GM10248 (cell line): ENCODE measurements at regions of chr21 and their contacts with region 1.

Region 1: DNA sequence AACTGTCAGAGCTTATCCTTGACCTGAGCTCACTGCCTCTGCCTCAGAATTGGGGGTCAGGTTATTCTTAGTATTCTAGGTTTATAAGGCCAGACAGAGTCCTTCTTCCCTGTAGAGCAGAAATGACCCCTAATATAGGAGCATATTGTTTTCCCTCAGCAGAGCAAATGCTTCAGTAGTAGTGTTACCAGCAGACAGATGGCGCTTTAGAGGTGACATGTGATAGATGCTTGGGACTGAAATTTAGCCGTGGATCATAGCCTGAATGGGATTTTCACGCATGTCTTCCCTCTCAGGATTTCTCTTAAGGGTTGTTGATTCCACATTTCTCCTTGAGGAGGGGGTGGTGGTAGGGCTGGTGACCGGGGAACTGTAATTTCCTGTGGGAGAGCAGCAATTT is 24.5 kb downstream of the ADARB1 start:
- DNase-seq: peak; percentile 56
- CTCF ChIP-seq: peak; percentile 60

Region 2: GRCh38 chr21:45029298-45029947 is 69.4 kb before region 1 on chr21:
- CTCF ChIA-PET with region 1: no interaction called
- POLR2A ChIA-PET with region 1: no interaction called
- DNase-seq: no peak
- CTCF ChIP-seq: no peak

Region 3: GRCh38 chr21:45078877-45079281 is 20.0 kb before region 1 on chr21:
- CTCF ChIA-PET with region 1: interaction called, 10 read pairs
- POLR2A ChIA-PET with region 1: no interaction called
- DNase-seq: no peak
- CTCF ChIP-seq: no peak

Region 4: DNA sequence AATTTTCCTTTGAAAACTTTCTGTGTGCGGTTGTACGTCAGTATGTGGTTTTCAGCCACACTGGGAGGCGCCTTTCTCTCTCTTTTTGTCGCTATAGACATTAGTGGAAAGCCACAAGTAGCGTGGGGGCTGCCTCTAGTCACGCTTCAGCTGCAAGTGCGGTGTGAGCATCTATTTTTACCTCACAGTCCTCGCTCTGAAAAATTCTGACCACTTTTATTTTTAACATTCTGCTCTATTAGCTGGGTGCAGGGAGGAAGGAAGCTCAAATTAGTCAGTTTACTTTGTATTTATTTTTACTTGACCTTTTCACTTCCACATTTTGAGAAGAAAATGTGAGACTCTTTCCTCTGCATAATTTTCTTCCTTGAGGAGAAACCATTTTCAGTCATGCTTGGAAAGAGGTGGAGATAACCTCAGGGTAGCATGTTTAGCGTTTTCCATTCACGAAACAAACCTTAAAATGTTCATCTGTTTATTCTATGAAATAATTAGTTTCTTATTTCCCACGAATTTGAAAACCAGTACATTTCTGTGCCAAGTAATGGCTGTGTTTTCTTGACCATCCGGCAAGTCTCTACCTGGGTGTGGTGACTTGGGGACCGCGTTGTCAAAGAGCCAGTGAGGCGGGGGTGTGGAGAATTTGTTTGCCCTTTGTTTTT is 11.1 kb after region 1 on chr21:
- CTCF ChIA-PET with region 1: interaction called, 20 read pairs
- POLR2A ChIA-PET with region 1: no interaction called
- DNase-seq: peak; percentile 82
- CTCF ChIP-seq: no peak

Region 5: DNA sequence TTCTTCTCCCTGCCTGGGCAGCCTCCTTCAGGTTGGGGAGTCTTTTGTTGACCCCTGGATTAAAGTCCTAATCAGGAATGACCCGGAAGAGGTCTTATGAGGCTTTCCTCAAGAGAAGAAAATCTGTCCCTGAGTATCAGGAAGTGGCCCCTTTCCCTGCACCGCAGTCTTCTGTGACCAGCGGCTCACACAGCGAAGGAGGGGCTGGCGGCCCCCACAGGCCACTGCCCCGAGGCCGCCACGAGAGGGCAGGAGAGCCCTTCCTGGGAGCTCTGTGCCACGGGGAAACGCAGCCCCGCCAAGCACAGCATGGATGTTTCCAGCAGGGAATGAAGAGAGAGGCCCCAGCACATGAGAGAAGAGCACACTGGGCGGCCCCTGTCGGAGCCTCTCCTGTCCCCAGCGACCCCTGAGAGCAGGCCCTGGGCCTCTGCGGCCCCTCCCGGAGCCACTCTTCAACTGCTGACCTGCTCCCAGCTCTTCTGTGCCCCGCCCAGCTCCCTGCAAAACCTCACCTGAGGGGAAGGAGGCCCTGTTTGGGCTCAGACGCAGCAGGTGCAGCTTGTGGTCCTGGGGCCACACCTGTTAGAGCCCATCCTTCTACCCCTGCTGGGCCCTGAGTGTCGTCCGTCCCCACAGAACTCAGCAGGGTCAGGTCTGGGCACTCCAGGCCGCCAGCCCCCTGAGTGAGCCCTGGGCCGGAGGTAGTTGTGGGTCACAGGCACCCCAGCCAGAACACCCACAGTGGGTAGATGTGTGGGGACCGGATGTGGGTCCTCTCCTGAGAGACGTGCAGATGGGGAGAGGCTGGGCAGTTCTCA is 193.7 kb after region 1 on chr21:
- CTCF ChIA-PET with region 1: no interaction called
- POLR2A ChIA-PET with region 1: no interaction called
- DNase-seq: peak; percentile 84
- CTCF ChIP-seq: peak; percentile 93